Activated CD8-positive, alpha-beta T cell treated with anti-CD3 and anti-CD28 coated beads, Interleukin-2, amount 10 ng/mL, durations not matched to agents 7 days and 5 days (primary cell): ENCODE measurements at regions of chr19 and their contacts with region 1.

Region 1: GRCh38 chr19:20776083-20777076 is at the start of gene ZNF66:
- DNase-seq: peak; percentile 97
- ATAC-seq: peak; percentile 98
- H3K4me3 Mint-ChIP-seq: peak within 1 kb of the TSS; percentile 99
- H3K27ac Mint-ChIP-seq: peak within 1 kb of the TSS; percentile 99
- H3K4me1 Mint-ChIP-seq: peaks cover 15% of the 10 kb centered on the region
- H3K27me3 Mint-ChIP-seq: no peaks in the 10 kb centered on the region
- total RNA-seq, gene ZNF66: 18.1 to 18.5 TPM

Region 2: GRCh38 chr19:20565321-20566018 is 210.9 kb before region 1 on chr19 and contains the start of gene ZNF737:
- CTCF ChIA-PET with region 1: interaction called, 3 read pairs
- POLR2A ChIA-PET with region 1: interaction called, 22 read pairs
- DNase-seq: peak; percentile 96
- ATAC-seq: peak; percentile 99
- H3K4me3 Mint-ChIP-seq: peak within 1 kb of the TSS; percentile 99
- H3K27ac Mint-ChIP-seq: peak within 1 kb of the TSS; percentile 99
- H3K4me1 Mint-ChIP-seq: peaks cover 7% of the 10 kb centered on the region
- H3K27me3 Mint-ChIP-seq: no peaks in the 10 kb centered on the region
- total RNA-seq, gene ZNF737: 18.4 to 19.1 TPM

Region 3: DNA sequence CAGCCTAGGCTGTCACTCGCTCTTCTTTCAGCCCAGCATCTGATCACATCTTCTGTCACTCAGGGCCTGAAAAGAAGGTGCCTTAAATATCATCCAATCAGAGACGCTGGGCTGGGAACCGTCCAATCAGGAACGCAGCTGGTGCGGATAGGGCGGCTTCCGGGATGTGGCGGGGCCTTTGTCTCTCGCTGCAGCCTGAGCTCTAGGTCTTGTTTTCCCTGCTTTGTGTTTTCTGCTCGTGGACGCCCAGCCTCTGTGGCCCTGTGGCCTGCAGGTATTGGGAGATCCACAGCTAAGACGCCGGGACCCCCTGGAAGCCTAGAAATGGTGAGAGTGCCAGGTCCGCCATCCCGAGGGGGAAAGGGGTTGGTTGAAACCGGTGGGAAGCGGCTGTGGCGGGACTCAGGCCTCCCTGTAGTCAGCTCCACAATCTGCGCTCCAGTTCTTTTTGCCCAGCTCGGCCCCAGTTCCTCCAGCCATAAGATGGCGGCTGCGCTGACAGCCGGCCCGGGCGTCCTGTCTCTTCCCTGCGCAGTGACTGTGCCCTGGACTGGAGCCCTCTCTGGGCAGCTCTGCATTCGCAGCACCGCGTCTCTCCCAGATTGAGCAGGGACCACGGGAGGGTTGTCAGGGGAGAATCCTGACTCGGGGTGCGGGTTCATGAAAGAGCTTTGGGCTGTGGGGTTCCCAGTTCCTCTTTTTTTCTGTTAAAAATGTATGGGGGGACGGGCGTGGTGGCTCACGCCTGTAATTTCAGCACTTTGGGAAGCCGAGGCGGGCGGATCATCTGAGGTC is 146.9 kb after region 1 on chr19 and contains the start of gene ZNF85:
- CTCF ChIA-PET with region 1: no interaction called
- POLR2A ChIA-PET with region 1: interaction called, 26 read pairs
- DNase-seq: peak; percentile 96
- ATAC-seq: peak; percentile 100
- H3K4me3 Mint-ChIP-seq: peak within 1 kb of the TSS; percentile 98
- H3K27ac Mint-ChIP-seq: peak within 1 kb of the TSS; percentile 99
- H3K4me1 Mint-ChIP-seq: peaks cover 32% of the 10 kb centered on the region
- H3K27me3 Mint-ChIP-seq: no peaks in the 10 kb centered on the region
- total RNA-seq, gene ZNF85: 24.6 to 24.7 TPM

Region 4: GRCh38 chr19:21020298-21021227 is 244.2 kb after region 1 on chr19 and contains the start of gene ZNF430:
- CTCF ChIA-PET with region 1: no interaction called
- POLR2A ChIA-PET with region 1: interaction called, 13 read pairs
- DNase-seq: peak; percentile 98
- ATAC-seq: peak; percentile 96
- H3K4me3 Mint-ChIP-seq: peak within 1 kb of the TSS; percentile 99
- H3K27ac Mint-ChIP-seq: peak within 1 kb of the TSS; percentile 99
- H3K4me1 Mint-ChIP-seq: peaks cover 35% of the 10 kb centered on the region
- H3K27me3 Mint-ChIP-seq: no peaks in the 10 kb centered on the region
- total RNA-seq, gene ZNF430: 22.0 to 25.5 TPM

Region 5: GRCh38 chr19:21328885-21329605 is 552.7 kb after region 1 on chr19 and contains the start of gene ZNF708:
- CTCF ChIA-PET with region 1: interaction called, 3 read pairs
- POLR2A ChIA-PET with region 1: interaction called, 13 read pairs
- DNase-seq: peak; percentile 91
- ATAC-seq: peak; percentile 99
- H3K4me3 Mint-ChIP-seq: peak within 1 kb of the TSS; percentile 99
- H3K27ac Mint-ChIP-seq: peak within 1 kb of the TSS; percentile 99
- H3K4me1 Mint-ChIP-seq: peaks cover 28% of the 10 kb centered on the region
- H3K27me3 Mint-ChIP-seq: no peaks in the 10 kb centered on the region
- total RNA-seq, gene ZNF708: 16.4 to 17.0 TPM